A673 (cell line): ENCODE measurements at regions of chr22 and their contacts with region 1.

Region 1: GRCh38 chr22:28594797-28595462 is 84.7 kb downstream of the TTC28 start:
- DNase-seq: peak; percentile 86
- H3K4me3 ChIP-seq: no peak overlapping the region
- H3K27ac ChIP-seq: no peak overlapping the region
- H3K4me1 ChIP-seq: peaks cover 18% of the 10 kb centered on the region
- H3K27me3 ChIP-seq: no peaks in the 10 kb centered on the region
- CTCF ChIP-seq: peak; percentile 83

Region 2: DNA sequence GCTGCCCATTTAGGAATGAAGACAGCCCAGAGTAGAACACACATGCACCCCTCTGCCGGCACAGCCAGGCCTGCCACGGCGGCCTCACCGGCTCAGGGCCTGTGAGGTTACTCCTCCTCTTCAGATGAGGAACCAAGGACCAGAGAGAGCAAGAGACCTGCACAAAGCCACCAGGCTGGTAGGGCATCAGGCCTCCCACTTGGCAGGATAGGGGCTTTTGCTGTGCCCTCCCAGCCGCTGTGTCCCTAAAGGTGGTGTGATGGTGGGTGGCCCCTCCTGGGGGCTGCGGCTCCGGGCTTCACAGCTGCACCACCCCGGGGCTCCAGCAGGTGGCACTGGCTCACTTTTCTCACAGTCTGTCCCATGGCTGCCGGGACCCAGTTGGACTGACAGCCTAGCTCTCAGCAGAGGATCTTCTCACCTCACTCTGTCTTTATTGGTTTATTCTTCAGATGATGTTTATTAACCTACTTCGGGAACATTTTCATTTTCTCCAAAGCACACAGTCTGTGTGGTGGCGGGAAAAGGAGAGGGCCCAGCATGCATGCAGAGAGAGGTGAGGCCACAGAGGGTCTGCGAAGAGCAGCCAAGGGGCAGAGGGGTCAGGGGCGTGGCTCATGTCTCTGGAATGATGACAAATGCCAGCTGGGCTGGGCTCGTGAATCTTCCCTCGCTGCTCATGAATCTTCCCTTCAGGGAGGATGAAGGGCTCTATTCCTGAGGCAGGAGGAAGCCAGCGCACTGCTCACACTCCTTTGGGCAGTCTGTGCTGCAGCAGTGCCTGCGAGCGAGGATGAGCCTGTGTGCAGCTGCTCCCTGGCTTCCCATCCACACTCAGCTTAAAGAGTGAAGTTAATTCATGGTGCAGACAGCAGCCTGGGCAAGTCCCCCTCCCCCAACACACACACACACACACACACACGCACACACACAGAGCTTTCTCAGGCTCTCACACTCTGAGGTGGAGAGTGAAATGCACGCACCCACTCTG is 574.8 kb before region 1 on chr22:
- CTCF ChIA-PET with region 1: interaction called, 3 read pairs
- POLR2A ChIA-PET with region 1: no interaction called
- intact Hi-C with region 1: loop called (anchors 10 kb)
- DNase-seq: peak; percentile 77
- H3K4me3 ChIP-seq: no peak overlapping the region
- H3K27ac ChIP-seq: no peak overlapping the region
- H3K4me1 ChIP-seq: no peaks in the 10 kb centered on the region
- H3K27me3 ChIP-seq: no peaks in the 10 kb centered on the region
- CTCF ChIP-seq: peak; percentile 97

Region 3: GRCh38 chr22:28442264-28442710 is 152.6 kb before region 1 on chr22:
- CTCF ChIA-PET with region 1: no interaction called
- POLR2A ChIA-PET with region 1: no interaction called
- intact Hi-C with region 1: loop called (anchors 5 kb)
- DNase-seq: peak; percentile 74
- H3K4me3 ChIP-seq: peak overlapping the region; percentile 49
- H3K27ac ChIP-seq: no peak overlapping the region
- H3K4me1 ChIP-seq: peaks cover 57% of the 10 kb centered on the region
- H3K27me3 ChIP-seq: no peaks in the 10 kb centered on the region
- CTCF ChIP-seq: peak; percentile 73

Region 4: DNA sequence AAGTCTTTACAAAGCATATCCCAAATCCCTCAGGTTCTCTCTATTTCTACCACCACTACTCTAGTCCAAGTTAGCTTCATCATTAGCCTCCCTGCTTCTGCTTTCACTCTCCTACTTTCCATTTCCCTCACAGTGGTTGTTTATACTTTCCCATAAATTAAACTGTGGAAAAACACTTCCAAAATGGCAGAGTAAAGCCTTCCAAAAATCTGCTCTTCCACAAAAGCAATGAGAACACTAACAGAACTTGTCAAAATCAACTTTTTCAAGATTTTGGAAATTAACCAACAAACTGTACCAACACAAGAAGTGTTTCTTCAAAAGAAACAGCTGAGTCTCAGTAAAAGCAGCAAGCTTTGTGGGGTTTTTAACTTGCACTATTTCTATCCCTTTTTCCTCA is 12.9 kb after region 1 on chr22:
- CTCF ChIA-PET with region 1: no interaction called
- POLR2A ChIA-PET with region 1: no interaction called
- intact Hi-C with region 1: no loop called
- DNase-seq: no peak
- H3K4me3 ChIP-seq: no peak overlapping the region
- H3K27ac ChIP-seq: no peak overlapping the region
- H3K4me1 ChIP-seq: no peaks in the 10 kb centered on the region
- H3K27me3 ChIP-seq: no peaks in the 10 kb centered on the region
- CTCF ChIP-seq: no peak